CD8-positive, alpha-beta T cell (primary cell): ENCODE measurements at regions of chr18 and their contacts with region 1.

Region 1: DNA sequence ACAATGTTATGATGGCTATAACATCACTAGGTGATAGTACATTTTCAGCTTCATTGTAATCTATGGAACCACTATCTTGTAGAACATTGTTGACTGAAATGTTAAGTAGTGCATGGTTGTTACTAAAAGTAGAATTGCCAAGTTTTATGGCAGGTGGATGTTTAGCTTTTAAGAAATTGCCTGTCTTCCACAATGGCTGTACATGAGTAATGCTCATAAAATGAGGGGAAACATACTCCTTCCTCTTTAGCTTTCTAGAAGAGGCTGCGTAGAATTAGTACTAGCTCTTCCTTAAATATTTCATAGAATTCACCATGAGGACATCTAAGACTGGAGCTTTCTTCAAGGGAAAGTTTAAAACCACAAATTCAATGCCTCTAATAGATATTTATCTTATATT is 161.0 kb downstream of the TPGS2 start:
- DNase-seq: no peak
- ATAC-seq: no peak
- H3K4me3 ChIP-seq: no peak overlapping the region
- H3K4me3 Mint-ChIP-seq: no peak overlapping the region
- H3K27ac ChIP-seq: no peak overlapping the region
- H3K27ac Mint-ChIP-seq: no peak overlapping the region
- H3K4me1 ChIP-seq: no peaks in the 10 kb centered on the region
- H3K4me1 Mint-ChIP-seq: no peaks in the 10 kb centered on the region
- H3K27me3 ChIP-seq: peaks cover 0 to 3% of the 10 kb centered on the region in 2 experiments
- H3K27me3 Mint-ChIP-seq: peaks cover 8% of the 10 kb centered on the region
- CTCF ChIP-seq: no peak

Region 2: DNA sequence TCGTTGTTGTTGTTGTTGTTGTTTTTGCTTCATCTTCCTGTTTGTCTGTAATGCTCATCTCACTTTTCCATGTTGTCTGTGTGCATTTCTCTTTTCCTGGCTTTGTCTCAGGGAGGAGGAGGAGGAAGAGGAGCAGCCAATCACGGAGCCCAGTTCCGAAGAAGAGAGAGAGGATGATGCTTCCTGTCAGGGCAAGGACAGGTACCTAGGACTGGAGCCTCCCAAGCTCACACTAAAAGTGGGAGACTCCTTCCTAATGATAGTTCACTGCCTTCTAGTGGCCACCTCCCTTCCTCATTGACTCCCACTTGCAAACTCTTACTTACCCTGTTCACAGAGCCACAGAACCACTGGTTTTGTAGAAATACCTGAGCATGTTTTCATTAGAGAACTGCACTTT is 18.6 kb before region 1 on chr18:
- CTCF ChIA-PET with region 1: no interaction called
- POLR2A ChIA-PET with region 1: no interaction called
- intact Hi-C with region 1: loop called in 1 of 2 experiments (anchors 2 kb)
- DNase-seq: no peak
- ATAC-seq: no peak
- H3K4me3 ChIP-seq: no peak overlapping the region
- H3K4me3 Mint-ChIP-seq: no peak overlapping the region
- H3K27ac ChIP-seq: no peak overlapping the region
- H3K27ac Mint-ChIP-seq: no peak overlapping the region
- H3K4me1 ChIP-seq: no peaks in the 10 kb centered on the region
- H3K4me1 Mint-ChIP-seq: no peaks in the 10 kb centered on the region
- H3K27me3 ChIP-seq: no peaks in the 10 kb centered on the region
- H3K27me3 Mint-ChIP-seq: no peaks in the 10 kb centered on the region
- CTCF ChIP-seq: no peak

Region 3: DNA sequence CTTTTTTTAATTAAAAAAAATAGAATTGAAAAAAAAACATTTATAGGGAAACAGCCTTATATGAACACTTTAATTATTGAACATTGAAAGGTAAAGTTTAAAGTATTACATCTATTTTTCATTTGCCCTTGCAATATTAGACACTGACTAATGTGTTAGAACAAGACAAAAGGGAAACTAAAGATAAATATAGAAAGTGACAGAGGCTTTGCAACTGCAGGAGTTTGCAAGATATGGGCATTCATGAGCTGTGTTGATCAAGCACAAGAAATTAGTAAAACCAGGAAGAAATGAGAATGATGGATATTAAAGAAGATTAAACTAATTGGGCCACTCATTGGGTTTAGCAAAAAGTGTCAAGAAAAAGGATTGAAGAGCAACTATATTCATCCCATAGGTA is 1995.5 kb after region 1 on chr18:
- CTCF ChIA-PET with region 1: no interaction called
- POLR2A ChIA-PET with region 1: no interaction called
- intact Hi-C with region 1: no loop called
- DNase-seq: no peak
- ATAC-seq: no peak
- H3K4me3 ChIP-seq: no peak overlapping the region
- H3K4me3 Mint-ChIP-seq: no peak overlapping the region
- H3K27ac ChIP-seq: no peak overlapping the region
- H3K27ac Mint-ChIP-seq: no peak overlapping the region
- H3K4me1 ChIP-seq: no peaks in the 10 kb centered on the region
- H3K4me1 Mint-ChIP-seq: no peaks in the 10 kb centered on the region
- H3K27me3 ChIP-seq: no peaks in the 10 kb centered on the region
- H3K27me3 Mint-ChIP-seq: no peaks in the 10 kb centered on the region
- CTCF ChIP-seq: no peak